K562 (cell line): ENCODE measurements at regions of chr5 and their contacts with region 1.

Region 1: GRCh38 chr5:108345541-108346171 is 36.2 kb downstream of the FBXL17 start:
- DNase-seq: peak in 2 of 4 experiments; percentile 9 to 55
- ATAC-seq: peak; percentile 74
- H3K4me3 ChIP-seq: no peak overlapping the region
- H3K27ac ChIP-seq: no peak overlapping the region
- H3K4me1 ChIP-seq: no peaks in the 10 kb centered on the region
- H3K27me3 ChIP-seq: no peaks in the 10 kb centered on the region
- CTCF ChIP-seq: peak in 1 of 3 experiments; percentile 58; a peak in 2 of 6 replicates
- EP300 ChIP-seq: no peak
- POLR2A ChIP-seq: no peak
- RAD21 ChIP-seq: peak; percentile 70 to 82

Region 2: GRCh38 chr5:107661650-107662044 is 684.0 kb before region 1 on chr5:
- CTCF ChIA-PET with region 1: no interaction called
- POLR2A ChIA-PET with region 1: no interaction called
- in situ Hi-C with region 1: no loop called
- intact Hi-C with region 1: no loop called
- DNase-seq: no peak
- ATAC-seq: no peak
- H3K4me3 ChIP-seq: no peak overlapping the region
- H3K27ac ChIP-seq: no peak overlapping the region
- H3K4me1 ChIP-seq: no peaks in the 10 kb centered on the region
- H3K27me3 ChIP-seq: no peaks in the 10 kb centered on the region
- CTCF ChIP-seq: no peak
- EP300 ChIP-seq: no peak
- POLR2A ChIP-seq: no peak
- RAD21 ChIP-seq: no peak

Region 3: GRCh38 chr5:107673368-107674136 is 672.1 kb before region 1 on chr5:
- CTCF ChIA-PET with region 1: no interaction called
- POLR2A ChIA-PET with region 1: no interaction called
- in situ Hi-C with region 1: no loop called
- intact Hi-C with region 1: loop called (anchors 10 kb)
- DNase-seq: peak; percentile 64 to 74 (median 66)
- ATAC-seq: peak; percentile 98
- H3K4me3 ChIP-seq: no peak overlapping the region
- H3K27ac ChIP-seq: no peak overlapping the region
- H3K4me1 ChIP-seq: peaks cover 0 to 10% of the 10 kb centered on the region in 2 experiments; a peak in 2 of 5 replicates
- H3K27me3 ChIP-seq: no peaks in the 10 kb centered on the region; a peak in 1 of 5 replicates
- CTCF ChIP-seq: peak; percentile 67 to 89 (median 68)
- EP300 ChIP-seq: no peak
- POLR2A ChIP-seq: no peak
- RAD21 ChIP-seq: peak; percentile 71 to 78

Region 4: DNA sequence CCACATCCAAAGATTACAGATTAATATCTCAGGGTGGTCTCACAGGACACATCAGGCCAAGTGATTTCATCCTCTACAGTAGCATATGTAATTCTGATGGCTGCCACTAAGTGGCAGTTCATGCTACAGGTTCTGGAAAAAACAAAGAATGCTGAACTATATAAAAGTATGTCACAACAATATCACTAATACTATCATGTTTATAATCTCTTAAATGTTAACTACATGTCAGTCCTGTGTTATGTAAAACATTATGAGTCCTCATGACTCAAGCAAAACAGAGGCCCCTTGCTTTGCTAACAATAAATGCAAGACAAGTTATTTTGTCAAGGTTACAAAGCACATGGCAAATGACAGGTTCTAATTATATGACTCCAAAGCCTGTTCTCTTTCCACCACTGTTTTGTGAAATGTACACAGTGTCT is 196.9 kb before region 1 on chr5:
- CTCF ChIA-PET with region 1: interaction called, 4 read pairs
- POLR2A ChIA-PET with region 1: no interaction called
- in situ Hi-C with region 1: no loop called
- intact Hi-C with region 1: loop called (anchors 10 kb)
- DNase-seq: peak in 1 of 4 experiments; percentile 9
- ATAC-seq: no peak
- H3K4me3 ChIP-seq: no peak overlapping the region
- H3K27ac ChIP-seq: no peak overlapping the region
- H3K4me1 ChIP-seq: no peaks in the 10 kb centered on the region
- H3K27me3 ChIP-seq: no peaks in the 10 kb centered on the region
- CTCF ChIP-seq: peak in 2 of 3 experiments; percentile 20 to 44; a peak in 2 of 6 replicates
- EP300 ChIP-seq: no peak
- POLR2A ChIP-seq: no peak
- RAD21 ChIP-seq: peak; percentile 29 to 64; a peak in 2 of 4 replicates

Region 5: GRCh38 chr5:108260117-108260857 is 85.4 kb before region 1 on chr5:
- CTCF ChIA-PET with region 1: interaction called, 18 read pairs
- POLR2A ChIA-PET with region 1: interaction called, 3 read pairs
- in situ Hi-C with region 1: no loop called
- intact Hi-C with region 1: loop called (anchors 1 kb)
- DNase-seq: peak; percentile 65 to 87 (median 69)
- ATAC-seq: peak; percentile 99
- H3K4me3 ChIP-seq: no peak overlapping the region
- H3K27ac ChIP-seq: no peak overlapping the region
- H3K4me1 ChIP-seq: no peaks in the 10 kb centered on the region; a peak in 3 of 5 replicates
- H3K27me3 ChIP-seq: no peaks in the 10 kb centered on the region
- CTCF ChIP-seq: peak; percentile 82 to 91 (median 89)
- EP300 ChIP-seq: no peak
- POLR2A ChIP-seq: no peak
- RAD21 ChIP-seq: peak; percentile 89 to 92

Region 6: GRCh38 chr5:108617467-108618435 is 272.1 kb after region 1 on chr5:
- CTCF ChIA-PET with region 1: no interaction called
- POLR2A ChIA-PET with region 1: no interaction called
- in situ Hi-C with region 1: no loop called
- intact Hi-C with region 1: no loop called
- DNase-seq: no peak
- ATAC-seq: no peak; the same call in 2 of the 3 replicates
- H3K4me3 ChIP-seq: no peak overlapping the region
- H3K27ac ChIP-seq: no peak overlapping the region
- H3K4me1 ChIP-seq: no peaks in the 10 kb centered on the region
- H3K27me3 ChIP-seq: peaks cover 0 to 3% of the 10 kb centered on the region in 2 experiments; a peak in 1 of 5 replicates
- CTCF ChIP-seq: peak in 2 of 3 experiments; percentile 12 to 13; a peak in 1 of 6 replicates
- EP300 ChIP-seq: no peak
- POLR2A ChIP-seq: no peak
- RAD21 ChIP-seq: no peak